Calu3 (cell line): ENCODE measurements at regions of chr18 and their contacts with region 1.

Region 1: GRCh38 chr18:24014986-24015638 is 558 bp downstream of the TTC39C start:
- DNase-seq: peak; percentile 35
- H3K4me3 Mint-ChIP-seq: peak overlapping the region; percentile 89
- H3K27ac Mint-ChIP-seq: peak overlapping the region; percentile 84
- H3K4me1 Mint-ChIP-seq: peaks cover 25% of the 10 kb centered on the region
- H3K27me3 Mint-ChIP-seq: peaks cover 8% of the 10 kb centered on the region
- CTCF ChIP-seq: no peak

Region 2: GRCh38 chr18:23635283-23636070 is 379.6 kb before region 1 on chr18:
- CTCF ChIA-PET with region 1: no interaction called
- intact Hi-C with region 1: no loop called
- DNase-seq: no peak
- H3K4me3 Mint-ChIP-seq: no peak overlapping the region
- H3K27ac Mint-ChIP-seq: peak overlapping the region; percentile 4
- H3K4me1 Mint-ChIP-seq: peaks cover 22% of the 10 kb centered on the region
- H3K27me3 Mint-ChIP-seq: no peaks in the 10 kb centered on the region
- CTCF ChIP-seq: no peak

Region 3: DNA sequence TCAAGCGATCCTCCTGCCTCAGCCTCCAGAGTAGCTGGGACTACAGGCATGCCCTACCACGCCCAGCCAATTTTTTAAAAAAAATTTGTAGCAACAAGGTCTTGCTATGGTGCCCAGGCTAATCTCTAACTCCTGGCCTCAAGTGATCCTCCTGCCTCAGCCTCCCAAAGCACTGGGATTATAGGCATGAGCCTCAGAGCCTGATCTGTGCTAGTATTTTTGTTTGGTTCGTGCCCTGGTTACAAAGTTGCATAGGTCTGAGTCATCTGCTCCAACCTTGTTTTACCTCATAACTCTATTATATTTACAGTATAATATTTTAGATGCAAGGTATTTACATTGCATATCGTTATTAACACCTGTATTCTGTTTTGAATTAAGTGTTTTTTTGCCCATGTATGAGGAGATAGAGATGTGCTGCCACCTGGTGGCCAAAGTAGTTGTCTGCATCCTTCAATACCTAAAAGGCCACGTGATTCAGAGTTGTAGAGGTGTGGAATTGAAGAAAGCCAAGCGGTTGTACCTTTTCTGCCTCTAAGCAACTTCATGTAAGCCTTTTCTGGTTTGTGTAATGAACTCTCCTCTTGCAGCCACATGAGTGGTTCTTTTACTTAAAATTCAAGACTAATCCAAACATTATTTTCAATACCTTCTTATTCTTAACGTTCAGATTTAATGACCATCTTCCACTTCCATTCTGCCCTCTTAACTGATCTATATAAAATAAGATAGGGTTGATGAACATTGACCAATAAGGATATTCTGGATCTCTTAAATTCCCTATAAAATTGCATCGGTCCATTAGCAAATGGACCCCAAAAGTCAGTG is 103.9 kb after region 1 on chr18:
- CTCF ChIA-PET with region 1: no interaction called
- intact Hi-C with region 1: loop called (anchors 5 kb)
- DNase-seq: peak; percentile 74
- H3K4me3 Mint-ChIP-seq: no peak overlapping the region
- H3K27ac Mint-ChIP-seq: no peak overlapping the region
- H3K4me1 Mint-ChIP-seq: peaks cover 25% of the 10 kb centered on the region
- H3K27me3 Mint-ChIP-seq: no peaks in the 10 kb centered on the region
- CTCF ChIP-seq: peak; percentile 81